ENCODE measurements at regions of chr18 and their contacts with region 1.

Region 1: GRCh38 chr18:877238-877637 is 27.4 kb upstream of the ADCYAP1 start:
- DNase-seq: no peak
- ATAC-seq: no peak

Region 2: GRCh38 chr18:839224-840022 is 37.8 kb before region 1 on chr18:
- intact Hi-C with region 1: no loop called
- DNase-seq: peak; percentile 89
- ATAC-seq: peak; percentile 94 to 96

Region 3: GRCh38 chr18:961644-962355 is 84.6 kb after region 1 on chr18:
- intact Hi-C with region 1: loop called in 1 of 2 experiments (anchors 10 kb)
- DNase-seq: peak; percentile 25
- ATAC-seq: peak; percentile 42 to 53

Region 4: GRCh38 chr18:1048032-1048431 is 170.8 kb after region 1 on chr18:
- intact Hi-C with region 1: no loop called
- DNase-seq: no peak
- ATAC-seq: no peak

Measured in left cardiac atrium (tissue), 4 donors.